ENCODE measurements at regions of chr11 and their contacts with region 1.

Region 1: DNA sequence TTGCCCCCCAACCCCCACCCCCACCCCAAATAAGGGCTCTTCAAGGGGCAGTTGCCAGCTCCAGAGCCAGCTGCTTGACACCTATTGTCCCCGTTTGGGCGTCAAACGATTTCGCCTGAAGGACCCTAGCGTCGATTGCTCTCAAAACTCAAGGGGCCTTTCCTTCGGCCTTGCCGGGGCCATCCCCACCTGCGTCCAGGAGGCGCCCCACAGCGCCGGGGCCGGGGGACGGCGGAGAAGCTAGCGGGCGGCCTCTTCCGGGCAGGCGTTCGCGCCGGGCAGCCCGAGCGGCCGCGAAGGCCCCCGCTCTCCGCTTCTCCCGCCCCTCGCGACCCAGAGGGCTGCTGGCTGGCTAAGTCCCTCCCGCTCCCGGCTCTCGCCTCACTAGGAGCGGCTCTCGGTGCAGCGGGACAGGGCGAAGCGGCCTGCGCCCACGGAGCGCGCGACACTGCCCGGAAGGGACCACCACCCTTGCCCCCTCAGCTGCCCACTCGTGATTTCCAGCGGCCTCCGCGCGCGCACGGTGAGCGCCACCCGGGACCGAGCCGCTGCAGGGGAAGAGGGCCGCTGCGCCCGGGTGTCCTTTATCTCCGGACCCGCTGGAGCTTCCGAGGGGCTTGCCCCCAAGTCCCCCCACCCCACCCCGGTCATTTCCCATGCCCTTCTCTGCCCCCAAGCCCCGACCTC is at the start of gene CAPRIN1:
- DNase-seq: peak; percentile 98
- H3K4me3 ChIP-seq: peak within 1 kb of the TSS; percentile 84 to 100 (median 98)
- H3K27ac ChIP-seq: peak within 1 kb of the TSS; percentile 98 to 99 (median 99)
- H3K4me1 ChIP-seq: peaks cover 30 to 54% (median 42%) of the 10 kb centered on the region in 6 donors
- H3K27me3 ChIP-seq: no peaks in the 10 kb centered on the region
- CTCF ChIP-seq: peak in 3 of 11 experiments; percentile 13 to 41 (median 20)
- POLR2A ChIP-seq: no peak
- total RNA-seq, gene CAPRIN1: 151 to 188 (median 159) TPM

Region 2: DNA sequence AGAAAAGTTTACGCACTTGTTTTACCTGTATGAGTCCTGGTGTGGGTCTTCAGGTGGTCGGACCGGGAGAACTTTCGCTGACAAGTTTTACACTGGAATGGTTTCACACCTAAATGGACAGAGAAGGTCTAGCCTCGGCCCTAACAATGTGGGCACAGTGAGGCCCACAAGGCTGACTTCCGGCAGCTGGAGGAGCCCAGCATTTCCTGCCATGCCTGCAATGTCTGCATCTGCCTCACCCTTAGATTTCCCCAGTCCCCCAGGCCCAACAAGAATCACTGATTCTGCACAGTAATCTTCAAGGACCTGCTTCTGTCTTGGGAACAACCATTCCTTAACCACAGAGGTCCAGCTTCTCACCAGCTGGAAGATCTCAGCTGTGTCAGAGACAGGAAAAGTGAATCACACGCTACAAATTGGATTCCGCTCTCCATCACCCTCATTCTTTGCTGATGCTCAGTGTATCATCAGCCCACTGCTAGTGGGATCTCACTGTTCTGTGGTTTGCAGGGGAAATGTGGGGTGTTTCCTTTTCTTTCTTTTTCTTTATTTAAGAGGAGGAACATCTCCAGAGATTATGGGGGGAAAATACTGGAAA is 1659.4 kb before region 1 on chr11:
- intact Hi-C with region 1: no loop called
- DNase-seq: no peak
- H3K4me3 ChIP-seq: no peak overlapping the region
- H3K27ac ChIP-seq: peak overlapping the region in 2 of 8 donors; percentile 11 to 12
- H3K4me1 ChIP-seq: peaks cover 0 to 4% (median 0%) of the 10 kb centered on the region in 6 donors
- H3K27me3 ChIP-seq: no peaks in the 10 kb centered on the region
- CTCF ChIP-seq: no peak
- POLR2A ChIP-seq: no peak

Region 3: DNA sequence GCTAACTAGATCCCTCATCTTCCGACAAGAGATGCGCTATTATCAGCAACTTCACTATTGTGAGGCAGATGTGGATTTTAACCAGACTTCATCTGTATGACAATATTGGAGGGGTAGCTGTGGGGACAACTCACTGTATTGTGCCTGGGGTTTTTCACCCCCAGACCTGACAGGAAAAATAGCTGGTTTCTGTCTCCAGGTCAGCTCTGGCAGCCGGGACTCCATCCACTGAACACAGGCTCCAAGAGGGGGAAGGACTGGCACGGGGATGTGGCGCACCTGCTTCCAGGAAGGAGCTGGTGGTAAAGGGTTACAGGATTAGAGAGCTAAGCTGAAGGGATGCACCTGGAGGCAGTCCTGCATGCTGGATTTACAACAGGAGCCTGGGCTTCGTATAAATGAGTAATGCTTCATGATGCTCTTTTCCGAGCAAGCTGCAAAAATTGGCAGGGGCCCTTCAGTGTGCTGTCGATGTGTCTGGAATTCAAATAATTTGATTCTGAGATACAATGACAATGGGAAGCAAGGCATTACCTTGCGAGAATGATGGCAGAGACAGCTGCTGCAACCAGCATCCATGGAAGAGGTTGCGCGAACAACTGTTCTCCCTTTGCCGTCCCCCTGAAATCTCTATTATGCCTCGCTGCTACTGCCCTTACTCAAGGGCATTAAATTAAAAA is 209.1 kb before region 1 on chr11:
- intact Hi-C with region 1: no loop called
- DNase-seq: no peak
- H3K4me3 ChIP-seq: no peak overlapping the region
- H3K27ac ChIP-seq: no peak overlapping the region
- H3K4me1 ChIP-seq: no peaks in the 10 kb centered on the region
- H3K27me3 ChIP-seq: peaks cover 0 to 6% (median 0%) of the 10 kb centered on the region in 7 donors
- CTCF ChIP-seq: no peak
- POLR2A ChIP-seq: no peak

Region 4: DNA sequence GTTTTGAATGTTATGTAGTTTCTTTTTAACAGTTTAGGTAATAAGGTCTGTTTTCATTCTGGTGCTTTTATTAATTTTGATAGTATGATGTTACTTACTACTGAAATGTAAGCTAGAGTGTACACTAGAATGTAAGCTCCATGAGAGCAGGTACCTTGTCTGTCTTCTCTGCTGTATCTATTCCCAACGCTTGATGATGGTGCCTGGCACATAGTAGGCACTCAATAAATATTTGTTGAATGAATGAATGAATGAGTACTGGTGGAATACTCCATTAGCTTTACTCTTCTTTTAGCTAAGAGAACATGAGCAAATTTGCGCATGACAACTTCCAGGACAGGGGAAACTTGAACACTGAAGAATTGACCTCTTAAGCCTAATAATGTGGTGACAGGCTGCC is 47.3 kb after region 1 on chr11:
- intact Hi-C with region 1: loop called (anchors 5 kb)
- DNase-seq: no peak
- H3K4me3 ChIP-seq: no peak overlapping the region
- H3K27ac ChIP-seq: no peak overlapping the region
- H3K4me1 ChIP-seq: peaks cover 0 to 7% (median under 1%) of the 10 kb centered on the region in 6 donors
- H3K27me3 ChIP-seq: no peaks in the 10 kb centered on the region
- CTCF ChIP-seq: no peak
- POLR2A ChIP-seq: no peak